Dorsolateral prefrontal cortex (tissue), 120 donors: ENCODE measurements at regions of chr17 and their contacts with region 1.

Region 1: GRCh38 chr17:50200457-50201275 is 765 bp downstream of the COL1A1 start:
- DNase-seq: peak in 9 of 10 donors; percentile 63 to 82 (median 75)
- H3K4me3 ChIP-seq: peak overlapping the region; percentile 26 to 75 (median 56)
- H3K27ac ChIP-seq: peak overlapping the region in 27 of 59 donors; percentile 6 to 82 (median 62)
- H3K27me3 ChIP-seq: peaks cover 0 to 48% (median 26%) of the 10 kb centered on the region in 45 donors
- CTCF ChIP-seq: peak in 55 of 56 donors; percentile 97 to 100 (median 100)

Region 2: GRCh38 chr17:50169121-50169764 is 31.4 kb before region 1 on chr17:
- intact Hi-C with region 1: loop called in 1 of 2 experiments (anchors 1 kb)
- DNase-seq: peak in 1 of 10 donors; percentile 49
- H3K4me3 ChIP-seq: no peak overlapping the region
- H3K27ac ChIP-seq: no peak overlapping the region
- H3K27me3 ChIP-seq: no peaks in the 10 kb centered on the region
- CTCF ChIP-seq: peak in 54 of 56 donors; percentile 24 to 73 (median 51)

Region 3: GRCh38 chr17:50258647-50259476 is 58.2 kb after region 1 on chr17:
- intact Hi-C with region 1: no loop called
- DNase-seq: peak in 1 of 10 donors; percentile 2
- H3K4me3 ChIP-seq: no peak overlapping the region
- H3K27ac ChIP-seq: no peak overlapping the region
- H3K27me3 ChIP-seq: peaks cover 0 to 34% (median 4%) of the 10 kb centered on the region in 45 donors
- CTCF ChIP-seq: no peak

Region 4: GRCh38 chr17:50269477-50270434 is 69.1 kb after region 1 on chr17:
- intact Hi-C with region 1: loop called (anchors 1 to 2 kb)
- DNase-seq: peak in 9 of 10 donors; percentile 18 to 74 (median 52)
- H3K4me3 ChIP-seq: no peak overlapping the region
- H3K27ac ChIP-seq: peak overlapping the region in 6 of 59 donors; percentile 10 to 58 (median 46)
- H3K27me3 ChIP-seq: peaks cover 0 to 16% (median 9%) of the 10 kb centered on the region in 45 donors
- CTCF ChIP-seq: peak; percentile 25 to 74 (median 60)

Region 5: DNA sequence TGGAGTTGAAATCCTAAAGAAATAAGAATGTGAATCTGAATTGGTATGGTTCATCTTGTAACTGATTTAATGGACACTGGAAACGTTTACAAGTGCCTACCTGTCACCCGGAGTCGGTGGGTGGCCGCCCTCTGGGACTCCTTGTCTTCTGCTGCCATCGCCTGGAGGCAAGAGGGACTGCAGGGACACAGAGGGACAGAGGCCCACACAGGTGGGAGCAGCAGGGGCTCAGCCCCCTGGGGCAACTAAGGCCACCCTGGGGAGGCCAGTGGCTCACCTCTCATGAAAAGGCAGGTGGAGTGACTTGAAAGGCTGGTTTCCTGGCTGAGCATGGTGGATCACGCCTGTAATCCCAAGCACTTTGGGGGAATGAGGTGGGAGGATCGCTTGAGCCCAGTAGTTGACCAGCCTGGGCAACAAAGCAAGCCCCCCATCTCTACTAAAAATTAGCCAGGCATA is 96.8 kb after region 1 on chr17:
- intact Hi-C with region 1: loop called (anchors 1 to 2 kb)
- DNase-seq: peak; percentile 57 to 84 (median 72)
- H3K4me3 ChIP-seq: no peak overlapping the region
- H3K27ac ChIP-seq: no peak overlapping the region
- H3K27me3 ChIP-seq: no peaks in the 10 kb centered on the region
- CTCF ChIP-seq: peak; percentile 44 to 97 (median 89)

Region 6: GRCh38 chr17:50443368-50443971 is 242.8 kb after region 1 on chr17:
- intact Hi-C with region 1: no loop called
- DNase-seq: no peak
- H3K4me3 ChIP-seq: no peak overlapping the region
- H3K27ac ChIP-seq: peak overlapping the region in 1 of 59 donors; percentile 40
- H3K27me3 ChIP-seq: no peaks in the 10 kb centered on the region
- CTCF ChIP-seq: no peak